ENCODE measurements at regions of chr10 and their contacts with region 1.

Region 1: GRCh38 chr10:50224330-50224952 is 26.9 kb downstream of the ASAH2 start:
- DNase-seq: peak; percentile 15
- H3K4me3 ChIP-seq: no peak overlapping the region
- H3K27me3 ChIP-seq: peaks cover 4% of the 10 kb centered on the region
- CTCF ChIP-seq: peak; percentile 67

Region 2: DNA sequence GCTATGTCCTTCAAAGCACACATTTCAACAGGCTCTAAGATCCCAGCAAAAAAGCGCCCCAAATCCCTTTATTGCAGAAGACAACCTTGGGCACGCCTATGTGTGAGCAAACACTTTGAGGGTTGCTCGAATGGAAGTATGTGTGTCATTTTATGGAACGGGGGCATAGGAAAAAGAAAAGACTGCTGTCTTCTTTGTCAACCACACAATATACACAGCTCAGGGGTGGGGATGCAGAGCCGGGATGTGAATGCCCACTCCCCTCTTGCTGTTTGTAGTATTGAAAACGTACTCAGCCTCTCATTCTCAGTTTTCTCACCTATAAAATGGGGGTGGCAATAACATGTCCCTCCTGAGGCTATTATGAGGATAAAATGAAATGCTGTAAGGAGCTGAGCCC is 512.9 kb before region 1 on chr10:
- CTCF ChIA-PET with region 1: no interaction called
- POLR2A ChIA-PET with region 1: no interaction called
- DNase-seq: no peak
- H3K4me3 ChIP-seq: no peak overlapping the region
- H3K27me3 ChIP-seq: peaks cover 2% of the 10 kb centered on the region; the same call in 1 of the 2 replicates
- CTCF ChIP-seq: no peak

Region 3: DNA sequence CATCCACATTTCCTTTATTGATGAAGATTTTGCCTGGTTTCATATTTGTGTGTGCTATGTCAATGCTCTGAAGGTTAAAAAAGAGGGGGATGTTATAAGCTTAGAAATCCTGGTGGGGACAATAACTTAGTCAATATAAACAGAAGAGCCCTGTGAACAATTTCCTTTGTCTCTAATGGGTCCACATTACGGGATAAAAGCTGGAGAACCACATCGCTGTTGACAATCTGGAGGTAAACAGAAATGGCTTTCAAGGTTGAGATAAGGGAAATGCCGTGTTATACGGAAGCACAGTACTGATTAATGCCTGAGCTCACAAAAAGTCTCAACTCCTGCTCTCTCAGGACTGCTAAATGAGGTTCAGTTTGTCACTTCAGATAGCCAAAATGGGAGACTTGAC is 10.0 kb after region 1 on chr10:
- CTCF ChIA-PET with region 1: interaction called, 12 read pairs
- POLR2A ChIA-PET with region 1: no interaction called
- DNase-seq: no peak
- H3K4me3 ChIP-seq: no peak overlapping the region
- H3K27me3 ChIP-seq: peaks cover 5% of the 10 kb centered on the region
- CTCF ChIP-seq: no peak

Region 4: GRCh38 chr10:50275650-50276235 is 51.3 kb after region 1 on chr10:
- CTCF ChIA-PET with region 1: interaction called, 13 read pairs
- POLR2A ChIA-PET with region 1: no interaction called
- DNase-seq: no peak
- H3K4me3 ChIP-seq: no peak overlapping the region
- H3K27me3 ChIP-seq: peaks cover 2% of the 10 kb centered on the region; the same call in 1 of the 2 replicates
- CTCF ChIP-seq: peak; percentile 62

Measured in BJ (cell line).